Activated naive CD4-positive, alpha-beta T cell treated with anti-CD3 and anti-CD28 coated beads, Interleukin-2, amount 10 ng/mL, durations not matched to agents 7 days and 5 days (primary cell): ENCODE measurements at regions of chrX and their contacts with region 1.

Region 1: GRCh38 chrX:109714340-109714958 is 18.6 kb downstream of the ACSL4 start:
- DNase-seq: no peak
- H3K4me3 Mint-ChIP-seq: no peak overlapping the region
- H3K27ac Mint-ChIP-seq: no peak overlapping the region
- H3K4me1 Mint-ChIP-seq: peaks cover 15% of the 10 kb centered on the region
- H3K27me3 Mint-ChIP-seq: no peaks in the 10 kb centered on the region

Region 2: GRCh38 chrX:109553862-109554261 is 160.6 kb before region 1 on chrX:
- CTCF ChIA-PET with region 1: no interaction called
- DNase-seq: no peak
- H3K4me3 Mint-ChIP-seq: no peak overlapping the region
- H3K27ac Mint-ChIP-seq: no peak overlapping the region
- H3K4me1 Mint-ChIP-seq: no peaks in the 10 kb centered on the region
- H3K27me3 Mint-ChIP-seq: no peaks in the 10 kb centered on the region

Region 3: DNA sequence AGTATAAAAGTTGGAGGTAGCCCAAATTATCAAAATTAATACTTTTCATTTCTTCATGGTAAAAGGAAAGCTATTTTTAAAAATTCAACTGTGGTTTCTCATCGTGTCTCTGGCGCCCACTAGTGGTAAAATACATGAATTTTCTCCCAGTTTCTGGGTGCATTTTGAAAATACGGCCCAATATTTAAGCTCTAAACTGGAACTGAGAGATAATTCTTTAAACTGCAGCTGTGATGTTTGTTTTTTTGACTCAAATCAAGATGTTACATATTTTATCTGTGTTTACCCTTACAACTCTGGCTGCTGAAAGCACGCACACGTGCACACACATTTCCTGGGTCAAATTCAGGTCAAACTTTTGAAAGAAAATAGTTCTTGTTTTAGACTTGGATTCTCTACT is 142.5 kb after region 1 on chrX:
- CTCF ChIA-PET with region 1: interaction called, 57 read pairs
- DNase-seq: peak; percentile 20
- H3K4me3 Mint-ChIP-seq: no peak overlapping the region
- H3K27ac Mint-ChIP-seq: no peak overlapping the region
- H3K4me1 Mint-ChIP-seq: no peaks in the 10 kb centered on the region
- H3K27me3 Mint-ChIP-seq: peaks cover 3% of the 10 kb centered on the region

Region 4: GRCh38 chrX:109974906-109975655 is 260.6 kb after region 1 on chrX:
- CTCF ChIA-PET with region 1: no interaction called
- DNase-seq: no peak
- H3K4me3 Mint-ChIP-seq: no peak overlapping the region
- H3K27ac Mint-ChIP-seq: peak overlapping the region; percentile 52
- H3K4me1 Mint-ChIP-seq: peaks cover 18% of the 10 kb centered on the region
- H3K27me3 Mint-ChIP-seq: peaks cover 8% of the 10 kb centered on the region